ENCODE measurements at regions of chr6 and their contacts with region 1.

Region 1: GRCh38 chr6:54801669-54802068 is 44.9 kb upstream of the FAM83B start:
- DNase-seq: no peak
- H3K4me3 ChIP-seq: no peak overlapping the region
- H3K4me3 Mint-ChIP-seq: no peak overlapping the region
- H3K27ac Mint-ChIP-seq: no peak overlapping the region
- H3K4me1 ChIP-seq: peaks cover 28% of the 10 kb centered on the region
- H3K4me1 Mint-ChIP-seq: peaks cover 27% of the 10 kb centered on the region
- H3K27me3 ChIP-seq: no peaks in the 10 kb centered on the region
- H3K27me3 Mint-ChIP-seq: no peaks in the 10 kb centered on the region
- CTCF ChIP-seq: no peak

Region 2: GRCh38 chr6:54730767-54731630 is 70.7 kb before region 1 on chr6:
- CTCF ChIA-PET with region 1: no interaction called
- POLR2A ChIA-PET with region 1: no interaction called
- intact Hi-C with region 1: loop called (anchors 5 kb)
- DNase-seq: peak; percentile 27 to 54
- H3K4me3 ChIP-seq: no peak overlapping the region
- H3K4me3 Mint-ChIP-seq: no peak overlapping the region
- H3K27ac Mint-ChIP-seq: peak overlapping the region; percentile 3
- H3K4me1 ChIP-seq: peaks cover 9% of the 10 kb centered on the region; the same call in 1 of the 2 replicates
- H3K4me1 Mint-ChIP-seq: peaks cover 8% of the 10 kb centered on the region
- H3K27me3 ChIP-seq: no peaks in the 10 kb centered on the region
- H3K27me3 Mint-ChIP-seq: no peaks in the 10 kb centered on the region
- CTCF ChIP-seq: no peak

Region 3: DNA sequence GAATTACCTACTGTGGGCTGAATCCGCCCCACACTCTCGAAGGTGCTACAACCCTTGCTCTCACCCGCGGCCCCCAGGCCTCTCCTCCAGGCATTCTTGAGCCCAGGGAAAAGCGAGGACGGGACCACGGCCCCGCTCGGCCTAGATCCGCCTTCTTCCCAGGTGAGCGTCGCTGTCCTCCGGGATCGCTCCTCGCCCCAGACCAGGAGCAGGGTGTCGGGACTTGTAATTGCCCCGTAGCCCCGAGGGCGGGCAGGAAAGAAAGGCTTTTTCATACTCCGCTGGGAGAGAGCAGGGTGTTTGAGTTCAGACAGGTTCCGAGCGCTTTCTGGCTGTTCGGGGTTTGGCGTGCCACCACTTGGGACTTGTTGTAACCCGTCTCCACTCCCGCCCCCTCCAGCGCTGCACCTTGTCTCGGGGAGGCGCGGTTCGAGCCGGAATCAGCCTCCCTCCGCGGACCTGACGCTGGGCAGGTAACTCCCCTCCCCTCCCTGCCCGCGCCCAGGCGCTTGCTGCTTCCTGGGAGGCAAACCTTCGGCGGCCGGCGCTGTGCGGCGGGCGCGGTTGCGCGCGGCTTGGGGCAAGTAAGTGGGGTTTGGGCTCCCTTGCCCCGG is 44.7 kb after region 1 on chr6 and contains the start of gene FAM83B:
- CTCF ChIA-PET with region 1: no interaction called
- POLR2A ChIA-PET with region 1: no interaction called
- intact Hi-C with region 1: loop called (anchors 1 kb)
- DNase-seq: peak; percentile 84 to 87
- H3K4me3 ChIP-seq: peak within 1 kb of the TSS; percentile 43
- H3K4me3 Mint-ChIP-seq: peak within 1 kb of the TSS; percentile 98
- H3K27ac Mint-ChIP-seq: peak within 1 kb of the TSS; percentile 93
- H3K4me1 ChIP-seq: peaks cover 22% of the 10 kb centered on the region
- H3K4me1 Mint-ChIP-seq: peaks cover 33% of the 10 kb centered on the region
- H3K27me3 ChIP-seq: no peaks in the 10 kb centered on the region
- H3K27me3 Mint-ChIP-seq: no peaks in the 10 kb centered on the region
- CTCF ChIP-seq: no peak
- total RNA-seq, gene FAM83B: 16.9 and 21.1 TPM in 2 replicates

Region 4: GRCh38 chr6:56156643-56157042 is 1355.0 kb after region 1 on chr6:
- CTCF ChIA-PET with region 1: no interaction called
- POLR2A ChIA-PET with region 1: no interaction called
- intact Hi-C with region 1: no loop called
- DNase-seq: no peak
- H3K4me3 ChIP-seq: no peak overlapping the region
- H3K4me3 Mint-ChIP-seq: no peak overlapping the region
- H3K27ac Mint-ChIP-seq: no peak overlapping the region
- H3K4me1 ChIP-seq: no peaks in the 10 kb centered on the region; the same call in 1 of the 2 replicates
- H3K4me1 Mint-ChIP-seq: peaks cover 8% of the 10 kb centered on the region
- H3K27me3 ChIP-seq: no peaks in the 10 kb centered on the region
- H3K27me3 Mint-ChIP-seq: no peaks in the 10 kb centered on the region
- CTCF ChIP-seq: no peak

Measured in Caco-2 (cell line).